Gastrocnemius medialis (tissue), 4 donors: ENCODE measurements at regions of chr19 and their contacts with region 1.

Region 1: GRCh38 chr19:16584248-16585141 is 12.3 kb upstream of the SLC35E1 start:
- DNase-seq: peak; percentile 90 to 91
- ATAC-seq: peak; percentile 59 to 60
- H3K4me3 ChIP-seq: peak overlapping the region; percentile 18 to 47 (median 26)
- H3K27ac ChIP-seq: peak overlapping the region; percentile 94 to 97 (median 95)
- H3K4me1 ChIP-seq: peaks cover 96 to 99% of the 10 kb centered on the region in 2 donors
- H3K27me3 ChIP-seq: no peaks in the 10 kb centered on the region
- CTCF ChIP-seq: no peak
- POLR2A ChIP-seq: peak; percentile 85 to 88

Region 2: GRCh38 chr19:16371540-16371986 is 212.9 kb before region 1 on chr19:
- in situ Hi-C with region 1: no loop called
- intact Hi-C with region 1: no loop called
- DNase-seq: no peak
- ATAC-seq: no peak
- H3K4me3 ChIP-seq: no peak overlapping the region
- H3K27ac ChIP-seq: peak overlapping the region in 2 of 4 donors; percentile 26 to 51
- H3K4me1 ChIP-seq: peaks cover 18 to 57% of the 10 kb centered on the region in 2 donors
- H3K27me3 ChIP-seq: no peaks in the 10 kb centered on the region
- CTCF ChIP-seq: no peak
- POLR2A ChIP-seq: no peak

Region 3: GRCh38 chr19:16441661-16442162 is 142.8 kb before region 1 on chr19:
- in situ Hi-C with region 1: no loop called
- intact Hi-C with region 1: loop called (anchors 5 kb)
- DNase-seq: peak in 1 of 2 donors; percentile 64
- ATAC-seq: peak; percentile 24 to 31
- H3K4me3 ChIP-seq: peak overlapping the region in 1 of 4 donors; percentile 7
- H3K27ac ChIP-seq: peak overlapping the region; percentile 91 to 99 (median 96)
- H3K4me1 ChIP-seq: peaks cover 64 to 65% of the 10 kb centered on the region in 2 donors
- H3K27me3 ChIP-seq: no peaks in the 10 kb centered on the region
- CTCF ChIP-seq: peak in 4 of 5 experiments; percentile 51 to 78 (median 64)
- POLR2A ChIP-seq: no peak

Region 4: DNA sequence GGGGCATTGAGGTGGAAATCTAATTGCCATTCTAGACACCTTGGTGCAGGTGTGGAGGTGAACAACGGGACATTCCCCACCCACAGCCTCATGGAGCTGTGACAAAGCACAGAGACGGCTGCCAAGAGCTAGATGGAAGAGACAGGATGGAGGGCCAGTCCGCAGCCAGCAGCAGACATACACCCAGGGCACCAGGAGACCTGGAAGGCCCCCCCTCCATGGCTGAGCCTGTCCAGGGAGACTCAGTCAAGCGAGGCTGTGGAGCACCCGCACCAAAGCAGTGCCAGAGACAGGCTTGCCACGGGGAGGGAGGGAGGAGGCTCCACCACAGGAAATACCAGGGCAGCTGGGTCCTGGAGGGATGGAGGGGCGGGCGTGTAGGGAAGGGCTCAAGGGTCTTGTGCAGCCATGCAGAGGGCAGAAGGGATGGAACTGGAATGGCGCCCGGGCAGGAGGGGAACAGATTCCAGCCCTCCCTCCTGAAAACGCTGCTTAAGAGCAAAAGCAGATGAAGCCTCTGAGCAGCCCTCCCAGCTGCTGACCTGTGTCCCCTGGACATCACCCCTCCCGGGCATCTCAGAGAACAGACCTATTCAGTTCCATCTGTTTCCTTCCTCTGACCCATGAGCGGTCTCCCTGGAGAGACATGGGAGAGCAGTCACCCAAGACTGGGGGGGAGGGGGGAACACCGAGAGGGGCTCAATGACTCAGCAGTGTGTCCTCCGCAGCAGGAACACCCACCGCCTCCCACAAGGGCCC is 127.1 kb before region 1 on chr19:
- in situ Hi-C with region 1: no loop called
- intact Hi-C with region 1: loop called (anchors 5 kb)
- DNase-seq: peak in 1 of 2 donors; percentile 71
- ATAC-seq: peak; percentile 19 to 26
- H3K4me3 ChIP-seq: peak overlapping the region; percentile 15 to 41 (median 34)
- H3K27ac ChIP-seq: peak overlapping the region; percentile 91 to 99 (median 96)
- H3K4me1 ChIP-seq: peaks cover 84 to 95% of the 10 kb centered on the region in 2 donors
- H3K27me3 ChIP-seq: no peaks in the 10 kb centered on the region
- CTCF ChIP-seq: no peak
- POLR2A ChIP-seq: peak in 1 of 2 donors; percentile 27

Region 5: GRCh38 chr19:16910750-16911445 is 326.4 kb after region 1 on chr19:
- in situ Hi-C with region 1: no loop called
- intact Hi-C with region 1: no loop called
- DNase-seq: no peak
- ATAC-seq: no peak
- H3K4me3 ChIP-seq: no peak overlapping the region
- H3K27ac ChIP-seq: no peak overlapping the region
- H3K4me1 ChIP-seq: no peaks in the 10 kb centered on the region
- H3K27me3 ChIP-seq: no peaks in the 10 kb centered on the region
- CTCF ChIP-seq: no peak
- POLR2A ChIP-seq: no peak